Activated naive CD4-positive, alpha-beta T cell treated with anti-CD3 and anti-CD28 coated beads for 36 hours (primary cell): ENCODE measurements at regions of chr10 and their contacts with region 1.

Region 1: DNA sequence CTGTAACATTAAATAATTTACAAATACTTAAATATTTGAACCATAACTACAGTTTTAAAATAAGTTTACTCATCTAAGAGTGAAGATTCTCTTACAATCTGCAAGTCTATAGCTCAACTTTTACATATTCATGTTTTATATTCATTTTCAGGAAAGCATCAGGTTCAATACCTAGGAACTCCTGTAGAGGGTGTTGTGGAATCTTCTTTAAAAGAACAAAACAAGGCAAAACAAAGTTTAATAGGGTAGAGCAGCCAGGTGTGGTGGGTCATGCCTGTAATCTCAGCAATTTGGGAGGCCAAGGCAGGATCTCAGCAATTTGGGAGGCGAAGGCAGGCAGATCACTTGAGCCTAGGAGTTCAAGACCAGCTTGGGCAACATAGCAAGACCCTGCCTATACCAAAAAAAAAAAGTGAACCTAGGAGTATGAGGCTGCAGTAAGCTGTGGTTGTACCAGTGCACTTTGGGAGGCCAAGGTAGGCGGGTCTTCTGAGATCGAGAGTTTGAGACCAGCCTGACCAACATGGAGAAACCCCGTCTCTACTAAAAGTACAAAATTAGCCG is 45.1 kb downstream of the ST8SIA6 start:
- DNase-seq: no peak
- H3K4me3 Mint-ChIP-seq: no peak overlapping the region
- H3K27ac Mint-ChIP-seq: no peak overlapping the region
- H3K4me1 Mint-ChIP-seq: peaks cover 22% of the 10 kb centered on the region
- H3K27me3 Mint-ChIP-seq: no peaks in the 10 kb centered on the region

Region 2: DNA sequence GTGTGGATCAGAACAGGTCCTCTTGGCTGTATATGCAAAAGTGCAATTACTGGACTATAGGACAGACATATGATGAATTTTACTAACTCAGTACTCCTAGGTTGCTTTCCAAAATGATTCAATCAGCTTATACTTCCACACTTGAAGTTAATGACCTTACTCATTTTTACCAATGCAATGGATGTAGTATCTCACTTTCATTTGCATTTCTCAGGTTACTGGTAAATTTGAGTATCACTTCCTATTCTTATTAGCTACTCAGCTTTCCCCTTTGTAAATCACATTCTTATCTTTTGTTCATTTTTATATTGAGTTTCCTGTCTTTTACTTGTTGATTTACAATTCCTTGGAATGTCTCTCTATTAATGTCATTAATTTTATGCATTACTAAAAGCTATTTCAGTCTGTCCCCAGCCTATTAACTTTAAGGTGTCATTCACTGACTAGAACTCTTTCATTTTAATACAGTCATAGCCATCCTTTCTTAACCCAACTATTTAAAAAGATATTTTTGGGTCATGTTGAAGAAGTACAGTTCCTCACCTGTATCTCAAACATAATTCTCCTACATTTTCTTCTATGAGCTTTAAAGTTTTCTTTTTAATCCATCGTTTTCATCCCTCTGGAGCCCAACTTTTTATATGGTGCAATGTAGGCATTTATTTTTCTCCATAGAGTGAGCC is 92.6 kb before region 1 on chr10:
- CTCF ChIA-PET with region 1: no interaction called
- intact Hi-C with region 1: no loop called
- DNase-seq: no peak
- H3K4me3 Mint-ChIP-seq: no peak overlapping the region
- H3K27ac Mint-ChIP-seq: no peak overlapping the region
- H3K4me1 Mint-ChIP-seq: peaks cover 9% of the 10 kb centered on the region
- H3K27me3 Mint-ChIP-seq: peaks cover 4% of the 10 kb centered on the region

Region 3: GRCh38 chr10:17474595-17475323 is 65.5 kb after region 1 on chr10:
- CTCF ChIA-PET with region 1: no interaction called
- intact Hi-C with region 1: loop called (anchors 5 kb)
- DNase-seq: no peak
- H3K4me3 Mint-ChIP-seq: no peak overlapping the region
- H3K27ac Mint-ChIP-seq: no peak overlapping the region
- H3K4me1 Mint-ChIP-seq: peaks cover 5% of the 10 kb centered on the region
- H3K27me3 Mint-ChIP-seq: peaks cover 7% of the 10 kb centered on the region

Region 4: GRCh38 chr10:17599089-17599488 is 189.8 kb after region 1 on chr10:
- CTCF ChIA-PET with region 1: interaction called, 3 read pairs
- intact Hi-C with region 1: loop called (anchors 1 kb)
- DNase-seq: no peak
- H3K4me3 Mint-ChIP-seq: no peak overlapping the region
- H3K27ac Mint-ChIP-seq: no peak overlapping the region
- H3K4me1 Mint-ChIP-seq: no peaks in the 10 kb centered on the region
- H3K27me3 Mint-ChIP-seq: no peaks in the 10 kb centered on the region

Region 5: DNA sequence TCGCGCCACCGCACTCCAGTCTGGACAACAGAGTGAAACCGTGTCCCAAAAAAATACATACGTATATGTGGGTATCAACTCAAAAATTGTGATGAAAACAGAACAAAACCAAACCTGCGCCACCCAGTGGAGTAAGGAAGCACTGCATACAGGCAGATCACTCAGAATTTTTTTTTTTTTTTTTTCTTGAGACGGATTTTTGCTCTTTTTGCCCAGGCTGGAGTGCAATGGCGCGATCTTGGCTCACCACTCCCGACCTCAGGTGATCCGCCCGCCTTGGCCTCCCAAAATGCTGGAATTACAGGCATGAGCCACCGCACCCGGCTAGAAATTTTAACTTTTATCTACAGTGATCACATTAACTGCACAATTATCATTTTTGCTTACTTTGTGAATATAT is 333.7 kb after region 1 on chr10:
- CTCF ChIA-PET with region 1: no interaction called
- intact Hi-C with region 1: loop called (anchors 1 kb)
- DNase-seq: peak; percentile 83
- H3K4me3 Mint-ChIP-seq: no peak overlapping the region
- H3K27ac Mint-ChIP-seq: no peak overlapping the region
- H3K4me1 Mint-ChIP-seq: peaks cover 8% of the 10 kb centered on the region
- H3K27me3 Mint-ChIP-seq: no peaks in the 10 kb centered on the region